H1 (cell line): ENCODE measurements at regions of chr1 and their contacts with region 1.

Region 1: GRCh38 chr1:35726450-35727433 is 8.1 kb upstream of the C1orf216 start:
- DNase-seq: peak in 1 of 2 experiments; percentile 69
- H3K4me3 ChIP-seq: no peak overlapping the region
- H3K27ac ChIP-seq: no peak overlapping the region
- H3K4me1 ChIP-seq: peaks cover 0 to 6% (median 3%) of the 10 kb centered on the region in 4 experiments; a peak in 4 of 7 replicates
- H3K27me3 ChIP-seq: no peaks in the 10 kb centered on the region
- CTCF ChIP-seq: peak; percentile 81 to 97 (median 87)
- EP300 ChIP-seq: no peak
- POLR2A ChIP-seq: no peak
- RAD21 ChIP-seq: peak; percentile 91 to 94

Region 2: GRCh38 chr1:35564037-35564883 is 162.5 kb before region 1 on chr1:
- CTCF ChIA-PET with region 1: interaction called, 91 read pairs
- POLR2A ChIA-PET with region 1: interaction called, 6 read pairs
- DNase-seq: peak in 1 of 2 experiments; percentile 94
- H3K4me3 ChIP-seq: no peak overlapping the region
- H3K27ac ChIP-seq: no peak overlapping the region
- H3K4me1 ChIP-seq: 0 out of 7 replicates have a peak, but pooled peaks cover 0 to 2% (median 0%) of the 10 kb centered on the region in 4 experiments
- H3K27me3 ChIP-seq: peaks cover 0 to under 1% (median 0%) of the 10 kb centered on the region in 4 experiments; a peak in 1 of 7 replicates
- CTCF ChIP-seq: peak in 2 of 3 experiments; percentile 86 to 91; a peak in 3 of 4 replicates
- EP300 ChIP-seq: peak in 1 of 2 experiments; percentile 37; a peak in 1 of 3 replicates
- POLR2A ChIP-seq: no peak
- RAD21 ChIP-seq: peak; percentile 64 to 77

Region 3: GRCh38 chr1:35605882-35606182 is 120.9 kb before region 1 on chr1:
- CTCF ChIA-PET with region 1: interaction called, 38 read pairs
- POLR2A ChIA-PET with region 1: no interaction called
- DNase-seq: no peak
- H3K4me3 ChIP-seq: no peak overlapping the region
- H3K27ac ChIP-seq: no peak overlapping the region
- H3K4me1 ChIP-seq: no peaks in the 10 kb centered on the region
- H3K27me3 ChIP-seq: no peaks in the 10 kb centered on the region
- CTCF ChIP-seq: no peak
- EP300 ChIP-seq: no peak
- POLR2A ChIP-seq: no peak
- RAD21 ChIP-seq: no peak

Region 4: GRCh38 chr1:35629051-35629450 is 97.7 kb before region 1 on chr1:
- CTCF ChIA-PET with region 1: interaction called, 10 read pairs
- POLR2A ChIA-PET with region 1: no interaction called
- DNase-seq: no peak
- H3K4me3 ChIP-seq: no peak overlapping the region
- H3K27ac ChIP-seq: no peak overlapping the region
- H3K4me1 ChIP-seq: no peaks in the 10 kb centered on the region
- H3K27me3 ChIP-seq: no peaks in the 10 kb centered on the region
- CTCF ChIP-seq: no peak
- EP300 ChIP-seq: no peak
- POLR2A ChIP-seq: no peak
- RAD21 ChIP-seq: no peak

Region 5: GRCh38 chr1:35702508-35702907 is 24.2 kb before region 1 on chr1:
- CTCF ChIA-PET with region 1: interaction called, 12 read pairs
- POLR2A ChIA-PET with region 1: interaction called, 3 read pairs
- DNase-seq: no peak
- H3K4me3 ChIP-seq: peak overlapping the region in 3 of 4 experiments; percentile 13 to 45 (median 32); a peak in 3 of 8 replicates
- H3K27ac ChIP-seq: no peak overlapping the region
- H3K4me1 ChIP-seq: peaks cover 8 to 19% (median 11%) of the 10 kb centered on the region in 4 experiments
- H3K27me3 ChIP-seq: peaks cover 0 to 4% (median 3%) of the 10 kb centered on the region in 4 experiments; a peak in 4 of 7 replicates
- CTCF ChIP-seq: peak; percentile 30 to 41 (median 32)
- EP300 ChIP-seq: no peak
- POLR2A ChIP-seq: no peak
- RAD21 ChIP-seq: peak in 1 of 2 experiments; percentile 21; a peak in 2 of 4 replicates

Region 6: DNA sequence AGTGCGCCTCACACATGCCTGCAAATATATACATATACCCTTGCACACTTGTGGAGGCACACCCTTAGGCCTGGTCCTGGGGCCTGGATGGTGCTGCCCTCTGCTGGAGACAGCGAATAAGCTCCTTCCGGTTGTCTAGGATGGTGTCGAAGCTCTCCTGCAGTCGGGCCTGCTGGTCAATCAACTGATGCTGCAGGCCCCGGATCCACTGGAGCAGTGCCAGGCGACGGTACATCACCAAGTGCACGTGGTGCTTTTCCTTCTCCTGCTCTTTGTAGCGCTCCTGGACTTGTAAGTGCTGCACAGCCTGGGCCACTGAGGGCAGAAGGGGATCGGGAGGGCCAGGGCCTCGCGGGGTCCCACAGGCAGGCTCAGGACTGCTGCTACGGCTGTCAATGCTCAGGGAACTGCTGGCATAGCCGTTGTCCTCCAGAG is 11.2 kb before region 1 on chr1:
- CTCF ChIA-PET with region 1: interaction called, 122 read pairs
- POLR2A ChIA-PET with region 1: interaction called, 10 read pairs
- DNase-seq: peak in 1 of 2 experiments; percentile 88
- H3K4me3 ChIP-seq: no peak overlapping the region
- H3K27ac ChIP-seq: no peak overlapping the region
- H3K4me1 ChIP-seq: peaks cover 3 to 9% (median 4%) of the 10 kb centered on the region in 4 experiments; a peak in 6 of 7 replicates
- H3K27me3 ChIP-seq: no peaks in the 10 kb centered on the region
- CTCF ChIP-seq: peak; percentile 89 to 95 (median 93)
- EP300 ChIP-seq: no peak
- POLR2A ChIP-seq: no peak
- RAD21 ChIP-seq: peak; percentile 85 to 91

Region 7: GRCh38 chr1:35747938-35748702 is 21.4 kb after region 1 on chr1:
- CTCF ChIA-PET with region 1: interaction called, 60 read pairs
- POLR2A ChIA-PET with region 1: no interaction called
- DNase-seq: no peak
- H3K4me3 ChIP-seq: no peak overlapping the region
- H3K27ac ChIP-seq: no peak overlapping the region
- H3K4me1 ChIP-seq: no peaks in the 10 kb centered on the region
- H3K27me3 ChIP-seq: no peaks in the 10 kb centered on the region
- CTCF ChIP-seq: no peak
- EP300 ChIP-seq: no peak
- POLR2A ChIP-seq: no peak
- RAD21 ChIP-seq: no peak

Region 8: GRCh38 chr1:35808450-35809113 is 81.8 kb after region 1 on chr1:
- CTCF ChIA-PET with region 1: no interaction called
- POLR2A ChIA-PET with region 1: no interaction called
- DNase-seq: peak in 1 of 2 experiments; percentile 74
- H3K4me3 ChIP-seq: peak overlapping the region; percentile 68 to 92 (median 71)
- H3K27ac ChIP-seq: no peak overlapping the region
- H3K4me1 ChIP-seq: peaks cover 0 to 3% (median 0%) of the 10 kb centered on the region in 4 experiments; a peak in 1 of 7 replicates
- H3K27me3 ChIP-seq: no peaks in the 10 kb centered on the region
- CTCF ChIP-seq: no peak
- EP300 ChIP-seq: no peak
- POLR2A ChIP-seq: no peak
- RAD21 ChIP-seq: no peak

Region 9: GRCh38 chr1:35873243-35873750 is 146.6 kb after region 1 on chr1:
- CTCF ChIA-PET with region 1: no interaction called
- POLR2A ChIA-PET with region 1: no interaction called
- DNase-seq: no peak
- H3K4me3 ChIP-seq: no peak overlapping the region
- H3K27ac ChIP-seq: no peak overlapping the region
- H3K4me1 ChIP-seq: no peaks in the 10 kb centered on the region
- H3K27me3 ChIP-seq: no peaks in the 10 kb centered on the region
- CTCF ChIP-seq: no peak
- EP300 ChIP-seq: no peak
- POLR2A ChIP-seq: no peak
- RAD21 ChIP-seq: no peak